WTC11 (cell line): ENCODE measurements at regions of chr5 and their contacts with region 1.

Region 1: DNA sequence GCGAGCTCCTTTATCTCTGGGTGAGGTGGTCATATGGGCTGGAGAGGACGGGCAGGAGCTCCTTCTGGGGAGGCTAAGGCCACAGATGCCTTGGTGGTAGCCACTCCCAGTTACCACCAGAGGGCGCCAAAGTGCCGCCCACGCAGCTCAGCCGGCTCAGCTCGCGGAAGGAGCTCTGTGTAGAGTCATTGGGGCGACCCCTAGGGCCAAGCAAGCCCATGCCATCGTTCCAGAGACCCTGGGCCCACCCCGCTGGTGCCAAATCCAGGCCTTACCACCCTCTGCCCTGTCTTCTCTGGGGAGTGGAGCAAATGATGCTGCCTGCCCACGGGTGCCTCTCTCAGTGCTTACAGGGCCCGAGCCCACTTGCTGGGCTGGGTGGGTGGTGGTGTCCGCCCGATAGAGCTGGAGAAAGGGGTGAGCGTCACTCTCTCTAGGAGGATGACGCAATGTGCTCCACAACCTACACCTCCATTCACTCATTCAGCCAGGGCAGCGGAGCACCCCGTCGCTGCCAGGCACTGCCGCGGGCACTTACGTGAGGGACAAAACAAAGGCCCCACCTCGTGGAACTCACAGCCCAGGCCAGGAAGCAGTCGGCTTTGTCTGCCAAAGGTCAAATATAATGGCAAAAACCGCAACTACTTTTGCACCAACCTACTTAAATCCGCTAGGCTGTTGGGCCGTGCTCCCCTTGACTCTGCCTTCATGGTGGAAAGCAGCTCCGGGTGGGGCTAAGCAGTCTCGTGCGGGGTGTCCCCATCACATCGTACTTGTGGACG is 13.8 kb downstream of the TSPAN17 start:
- DNase-seq: peak; percentile 89
- ATAC-seq: peak; percentile 83
- H3K4me3 Mint-ChIP-seq: no peak overlapping the region
- H3K27ac Mint-ChIP-seq: no peak overlapping the region
- H3K4me1 Mint-ChIP-seq: peaks cover 11% of the 10 kb centered on the region
- H3K27me3 Mint-ChIP-seq: no peaks in the 10 kb centered on the region
- CTCF ChIP-seq: peak; percentile 98

Region 2: GRCh38 chr5:176180339-176180738 is 480.7 kb before region 1 on chr5:
- CTCF ChIA-PET with region 1: no interaction called
- POLR2A ChIA-PET with region 1: no interaction called
- DNase-seq: no peak
- ATAC-seq: no peak
- H3K4me3 Mint-ChIP-seq: no peak overlapping the region
- H3K27ac Mint-ChIP-seq: no peak overlapping the region
- H3K4me1 Mint-ChIP-seq: peaks cover 9% of the 10 kb centered on the region
- H3K27me3 Mint-ChIP-seq: peaks cover 51% of the 10 kb centered on the region
- CTCF ChIP-seq: no peak

Region 3: DNA sequence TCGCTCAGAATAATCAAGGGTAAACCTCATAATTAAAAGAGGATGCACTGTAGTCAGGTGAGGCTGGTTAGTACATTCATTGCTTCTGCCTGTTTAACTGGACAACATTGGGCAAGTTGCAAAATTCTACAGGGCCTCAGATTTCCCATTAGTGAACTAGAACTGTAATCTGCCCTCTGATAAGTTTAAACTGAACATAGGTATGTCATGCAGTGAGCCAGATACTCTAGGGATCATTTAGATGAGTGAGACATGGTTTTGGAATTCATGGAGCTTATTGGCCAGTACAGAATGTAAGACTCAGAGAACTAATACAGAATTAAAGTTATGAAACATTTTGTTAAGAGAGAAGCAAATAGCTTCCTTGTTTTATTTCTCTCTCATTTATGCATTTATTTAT is 159.7 kb before region 1 on chr5:
- CTCF ChIA-PET with region 1: no interaction called
- POLR2A ChIA-PET with region 1: no interaction called
- DNase-seq: no peak
- ATAC-seq: no peak
- H3K4me3 Mint-ChIP-seq: no peak overlapping the region
- H3K27ac Mint-ChIP-seq: no peak overlapping the region
- H3K4me1 Mint-ChIP-seq: no peaks in the 10 kb centered on the region
- H3K27me3 Mint-ChIP-seq: no peaks in the 10 kb centered on the region
- CTCF ChIP-seq: no peak

Region 4: GRCh38 chr5:176700239-176700847 is 39.3 kb after region 1 on chr5:
- CTCF ChIA-PET with region 1: interaction called, 233 read pairs
- POLR2A ChIA-PET with region 1: interaction called, 5 read pairs
- DNase-seq: peak; percentile 70
- ATAC-seq: peak; percentile 53
- H3K4me3 Mint-ChIP-seq: no peak overlapping the region; the same call in 1 of the 2 replicates
- H3K27ac Mint-ChIP-seq: peak overlapping the region; percentile 37; the same call in 1 of the 2 replicates
- H3K4me1 Mint-ChIP-seq: peaks cover 59% of the 10 kb centered on the region
- H3K27me3 Mint-ChIP-seq: peaks cover 7% of the 10 kb centered on the region
- CTCF ChIP-seq: no peak

Region 5: DNA sequence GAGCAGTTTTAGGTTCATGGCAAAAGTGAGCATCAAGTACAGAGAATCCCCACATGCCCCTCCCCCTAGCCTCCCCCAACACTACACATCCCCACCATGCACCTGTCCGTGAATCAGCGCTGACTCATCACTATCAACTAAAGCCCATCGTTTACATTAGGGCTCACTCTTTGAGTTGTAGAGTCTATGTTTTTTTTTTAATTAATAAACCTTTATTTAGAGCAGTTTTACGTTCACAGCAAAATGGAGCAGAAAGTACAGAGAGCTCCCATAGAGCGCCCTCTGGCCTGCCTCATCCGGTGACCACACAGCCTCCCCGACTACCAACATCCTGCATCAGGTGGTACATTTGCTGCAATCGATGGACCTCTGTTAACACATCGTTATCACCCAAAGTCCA is 101.4 kb after region 1 on chr5:
- CTCF ChIA-PET with region 1: interaction called, 10 read pairs
- POLR2A ChIA-PET with region 1: no interaction called
- DNase-seq: no peak
- ATAC-seq: peak; percentile 77
- H3K4me3 Mint-ChIP-seq: no peak overlapping the region
- H3K27ac Mint-ChIP-seq: no peak overlapping the region
- H3K4me1 Mint-ChIP-seq: peaks cover 13% of the 10 kb centered on the region
- H3K27me3 Mint-ChIP-seq: peaks cover 4% of the 10 kb centered on the region
- CTCF ChIP-seq: no peak

Region 6: DNA sequence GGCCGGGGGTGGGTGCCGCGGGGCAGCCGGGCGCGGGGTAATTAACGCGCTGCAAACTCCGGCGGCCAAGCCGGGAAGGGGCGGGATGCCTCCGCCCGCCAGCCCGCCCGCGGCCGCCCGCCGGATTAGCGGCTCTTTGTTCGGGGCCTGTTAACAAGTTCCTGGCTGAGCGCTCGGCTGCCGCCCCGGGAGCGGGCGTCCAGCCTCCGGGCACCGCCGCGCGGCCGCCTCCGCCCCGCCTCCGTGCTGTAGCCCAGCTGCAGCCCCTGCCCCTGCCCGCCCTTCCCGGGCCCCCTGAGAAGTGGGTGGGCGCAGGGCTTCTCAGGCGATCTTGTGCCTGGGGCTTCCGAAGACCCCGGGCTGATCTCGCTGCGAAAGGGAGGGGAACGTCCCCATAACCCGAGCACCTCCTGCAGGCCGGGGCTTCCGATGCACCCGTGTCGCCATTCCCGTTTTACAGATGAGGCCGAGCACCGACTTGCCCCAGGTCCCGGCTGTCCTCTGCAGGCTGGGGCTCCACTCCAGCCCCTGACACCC is 156.9 kb after region 1 on chr5:
- CTCF ChIA-PET with region 1: interaction called, 62 read pairs
- POLR2A ChIA-PET with region 1: interaction called, 4 read pairs
- DNase-seq: peak; percentile 73
- ATAC-seq: peak; percentile 68
- H3K4me3 Mint-ChIP-seq: peak overlapping the region; percentile 59
- H3K27ac Mint-ChIP-seq: no peak overlapping the region
- H3K4me1 Mint-ChIP-seq: peaks cover 49% of the 10 kb centered on the region
- H3K27me3 Mint-ChIP-seq: peaks cover 16% of the 10 kb centered on the region
- CTCF ChIP-seq: no peak

Region 7: GRCh38 chr5:176875783-176876505 is 214.9 kb after region 1 on chr5:
- CTCF ChIA-PET with region 1: interaction called, 20 read pairs
- POLR2A ChIA-PET with region 1: no interaction called
- DNase-seq: no peak
- ATAC-seq: no peak
- H3K4me3 Mint-ChIP-seq: no peak overlapping the region
- H3K27ac Mint-ChIP-seq: no peak overlapping the region
- H3K4me1 Mint-ChIP-seq: no peaks in the 10 kb centered on the region
- H3K27me3 Mint-ChIP-seq: no peaks in the 10 kb centered on the region
- CTCF ChIP-seq: no peak

Region 8: DNA sequence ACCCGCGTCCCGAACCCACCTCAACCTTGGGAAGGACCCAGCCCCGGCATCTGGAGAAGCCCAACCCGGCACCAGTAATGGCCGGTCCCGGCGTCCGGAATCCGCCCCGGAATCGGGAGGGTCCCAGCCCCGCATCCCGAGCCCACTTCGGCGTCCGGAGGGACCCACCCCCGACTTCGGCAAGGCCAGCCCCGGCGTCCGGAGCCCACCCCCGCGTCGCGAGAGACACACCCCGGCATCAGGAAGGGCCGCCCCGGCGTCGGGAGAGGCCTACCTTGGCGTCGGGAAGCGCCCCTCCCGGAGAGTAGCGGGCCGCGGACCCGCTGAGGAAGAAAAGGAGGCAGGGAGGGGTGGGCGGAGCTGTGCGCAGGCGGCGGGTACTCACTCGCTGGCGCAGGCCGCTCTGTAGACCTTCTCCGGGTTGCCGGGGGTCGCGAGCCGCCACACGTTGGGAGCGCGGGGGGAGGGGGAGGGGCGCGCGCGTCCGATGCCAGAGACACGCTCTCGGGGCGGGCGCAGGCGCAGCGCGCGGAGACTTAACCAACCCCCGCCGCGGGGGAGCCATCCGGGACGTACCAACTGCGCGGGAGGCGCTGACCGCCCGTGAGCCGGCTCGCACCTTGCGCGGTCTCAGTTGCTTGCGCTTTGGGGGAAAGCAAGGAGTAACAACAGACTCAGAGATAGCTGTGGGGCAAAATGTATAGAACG is 345.4 kb after region 1 on chr5 and contains the start of gene UIMC1:
- CTCF ChIA-PET with region 1: interaction called, 16 read pairs
- POLR2A ChIA-PET with region 1: no interaction called
- DNase-seq: peak; percentile 94
- ATAC-seq: peak; percentile 86
- H3K4me3 Mint-ChIP-seq: peak within 1 kb of the TSS; percentile 94
- H3K27ac Mint-ChIP-seq: peak within 1 kb of the TSS; percentile 89
- H3K4me1 Mint-ChIP-seq: peaks cover 26% of the 10 kb centered on the region
- H3K27me3 Mint-ChIP-seq: peaks cover 5% of the 10 kb centered on the region; the same call in 1 of the 2 replicates
- CTCF ChIP-seq: no peak
- total RNA-seq, gene UIMC1: 44.4 to 48.0 TPM (median 46.1 TPM) in 3 replicates

Region 9: GRCh38 chr5:177162379-177162778 is 501.3 kb after region 1 on chr5:
- CTCF ChIA-PET with region 1: no interaction called
- POLR2A ChIA-PET with region 1: no interaction called
- DNase-seq: no peak
- ATAC-seq: peak; percentile 73
- H3K4me3 Mint-ChIP-seq: no peak overlapping the region
- H3K27ac Mint-ChIP-seq: peak overlapping the region; percentile 72
- H3K4me1 Mint-ChIP-seq: peaks cover 11% of the 10 kb centered on the region
- H3K27me3 Mint-ChIP-seq: no peaks in the 10 kb centered on the region
- CTCF ChIP-seq: no peak